Psoas muscle (tissue), 8 donors: ENCODE measurements at regions of chr15 and their contacts with region 1.

Region 1: GRCh38 chr15:29747837-29748417 is 74.3 kb downstream of the TJP1 start:
- DNase-seq: no peak
- ATAC-seq: no peak
- H3K4me3 ChIP-seq: no peak overlapping the region
- H3K27ac ChIP-seq: no peak overlapping the region
- H3K4me1 ChIP-seq: no peaks in the 10 kb centered on the region
- H3K27me3 ChIP-seq: no peaks in the 10 kb centered on the region
- CTCF ChIP-seq: peak; percentile 45

Region 2: GRCh38 chr15:29784413-29784812 is 36.5 kb after region 1 on chr15:
- intact Hi-C with region 1: no loop called
- DNase-seq: no peak
- ATAC-seq: no peak
- H3K4me3 ChIP-seq: no peak overlapping the region
- H3K27ac ChIP-seq: no peak overlapping the region
- H3K4me1 ChIP-seq: peaks cover 11% of the 10 kb centered on the region
- H3K27me3 ChIP-seq: no peaks in the 10 kb centered on the region
- CTCF ChIP-seq: no peak

Region 3: DNA sequence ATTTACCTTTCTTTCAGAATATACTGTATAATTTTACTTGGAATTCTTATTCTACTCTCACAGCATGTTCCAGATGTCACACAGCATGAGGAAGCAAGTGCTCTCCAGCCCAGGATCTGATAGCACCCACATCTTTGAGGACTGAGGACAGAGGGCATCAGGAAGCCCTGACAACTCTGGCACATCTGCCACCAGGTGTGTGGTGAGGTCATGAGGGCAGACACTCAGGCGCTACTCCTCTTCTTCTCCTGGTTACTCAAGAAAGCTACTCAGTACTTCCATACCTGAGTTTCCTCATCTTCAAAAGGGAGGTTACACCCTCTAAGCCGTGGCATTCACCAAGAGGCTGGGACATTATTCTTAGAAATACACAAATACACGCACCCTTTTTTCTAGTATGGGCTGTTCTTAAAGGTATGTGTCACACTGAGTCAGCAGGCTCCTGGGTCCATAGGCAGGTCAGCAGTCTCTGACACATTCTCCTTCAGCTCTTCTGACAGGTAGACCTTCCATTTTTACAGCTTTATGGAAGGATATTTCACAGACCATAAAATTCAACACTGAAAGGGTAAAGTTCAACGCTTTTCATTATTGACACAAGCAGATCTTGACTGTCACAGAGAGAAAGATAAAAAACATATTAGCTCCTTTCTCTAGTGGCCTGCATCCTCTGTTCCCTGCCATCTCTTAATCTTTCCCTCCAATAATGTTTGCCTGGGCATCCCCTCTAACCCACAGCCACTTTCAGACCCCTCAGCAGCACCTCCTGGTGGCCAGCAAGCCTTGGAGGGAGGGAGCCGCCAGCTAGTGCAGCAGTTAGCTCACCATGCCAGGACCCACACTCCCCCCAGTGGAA is 177.5 kb after region 1 on chr15:
- intact Hi-C with region 1: loop called in 1 of 2 experiments (anchors 5 kb)
- DNase-seq: peak; percentile 47 to 64
- ATAC-seq: peak in 3 of 4 donors; percentile 58 to 61 (median 58)
- H3K4me3 ChIP-seq: no peak overlapping the region
- H3K27ac ChIP-seq: no peak overlapping the region
- H3K4me1 ChIP-seq: no peaks in the 10 kb centered on the region
- H3K27me3 ChIP-seq: peaks cover 0 to 2% (median 0%) of the 10 kb centered on the region in 3 donors
- CTCF ChIP-seq: peak; percentile 58

Region 4: GRCh38 chr15:29935276-29936020 is 187.5 kb after region 1 on chr15:
- intact Hi-C with region 1: loop called in 1 of 2 experiments (anchors 5 kb)
- DNase-seq: no peak
- ATAC-seq: no peak
- H3K4me3 ChIP-seq: no peak overlapping the region
- H3K27ac ChIP-seq: no peak overlapping the region
- H3K4me1 ChIP-seq: no peaks in the 10 kb centered on the region
- H3K27me3 ChIP-seq: peaks cover 0 to 11% (median 0%) of the 10 kb centered on the region in 3 donors
- CTCF ChIP-seq: no peak